Activated CD4-positive, alpha-beta T cell treated with anti-CD3 and anti-CD28 coated beads, Interleukin-2, amount 10 ng/mL, durations not matched to agents 7 days and 5 days (primary cell): ENCODE measurements at regions of chr3 and their contacts with region 1.

Region 1: GRCh38 chr3:9062570-9062969 is 99.3 kb upstream of the RAD18 start:
- DNase-seq: no peak
- H3K4me3 Mint-ChIP-seq: no peak overlapping the region
- H3K27ac Mint-ChIP-seq: no peak overlapping the region
- H3K4me1 Mint-ChIP-seq: no peaks in the 10 kb centered on the region
- H3K27me3 Mint-ChIP-seq: no peaks in the 10 kb centered on the region

Region 2: GRCh38 chr3:8499181-8499611 is 563.4 kb before region 1 on chr3:
- CTCF ChIA-PET with region 1: interaction called, 10 read pairs
- POLR2A ChIA-PET with region 1: no interaction called
- DNase-seq: no peak
- H3K4me3 Mint-ChIP-seq: no peak overlapping the region
- H3K27ac Mint-ChIP-seq: no peak overlapping the region
- H3K4me1 Mint-ChIP-seq: peaks cover 14% of the 10 kb centered on the region
- H3K27me3 Mint-ChIP-seq: peaks cover 10% of the 10 kb centered on the region

Region 3: DNA sequence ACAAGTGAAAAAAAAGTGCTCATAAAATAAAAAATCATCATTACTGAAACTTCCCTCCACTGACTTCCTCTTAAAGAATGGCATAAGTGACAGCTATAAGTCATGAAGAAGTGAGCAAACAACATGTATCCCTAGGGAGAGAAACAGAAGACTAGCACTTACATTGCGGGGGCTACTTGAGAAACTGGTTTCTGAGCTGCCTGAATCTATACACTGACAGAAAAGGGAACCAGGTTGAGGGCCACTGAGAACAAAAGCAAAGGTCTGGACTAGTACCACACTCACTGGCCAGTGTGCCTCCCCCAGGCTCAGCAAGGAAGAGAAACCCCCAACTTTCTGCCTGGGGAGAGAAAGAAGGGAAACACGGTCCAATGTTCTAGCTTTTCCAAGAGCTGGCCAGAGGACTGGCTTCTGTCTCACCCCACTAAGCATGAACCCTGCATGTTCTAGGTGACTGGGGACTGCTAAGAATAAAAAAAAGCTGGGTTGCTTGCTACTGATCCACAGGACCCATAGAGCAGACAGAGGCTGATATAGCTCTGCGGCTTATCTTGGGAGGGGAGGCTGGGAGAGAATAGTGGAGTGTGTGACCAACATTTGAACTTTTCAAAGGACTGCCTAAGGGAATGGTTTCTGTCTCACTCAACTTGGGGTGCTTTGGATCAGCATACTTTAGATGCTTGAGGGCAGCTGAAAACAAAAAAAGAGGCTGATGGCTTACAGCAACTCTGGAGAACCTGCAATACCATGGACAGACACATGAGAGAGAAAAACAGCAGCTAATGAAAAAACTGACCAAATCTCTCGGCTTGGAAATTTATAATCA is 107.4 kb before region 1 on chr3:
- CTCF ChIA-PET with region 1: no interaction called
- POLR2A ChIA-PET with region 1: no interaction called
- DNase-seq: no peak
- H3K4me3 Mint-ChIP-seq: no peak overlapping the region
- H3K27ac Mint-ChIP-seq: no peak overlapping the region
- H3K4me1 Mint-ChIP-seq: peaks cover 33% of the 10 kb centered on the region
- H3K27me3 Mint-ChIP-seq: no peaks in the 10 kb centered on the region

Region 4: DNA sequence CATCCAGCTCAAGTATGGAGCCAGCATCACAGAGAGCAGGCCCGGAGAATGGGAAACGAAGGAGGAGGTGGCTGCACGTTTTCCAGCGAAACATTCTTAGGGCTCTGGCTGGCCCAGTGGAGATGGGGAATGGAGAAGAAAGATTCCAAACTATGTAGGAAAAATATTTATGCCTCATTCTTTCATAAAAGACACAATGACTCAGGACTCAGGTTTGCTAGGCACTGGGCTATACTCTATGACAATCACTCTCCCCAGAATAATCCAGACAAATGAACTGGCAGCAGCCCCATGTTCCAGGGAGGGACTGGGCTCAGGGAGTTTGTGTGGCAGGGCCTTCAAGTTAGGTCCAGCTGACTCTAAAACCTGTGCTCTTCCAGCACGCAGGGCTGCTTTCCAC is 11.5 kb after region 1 on chr3:
- CTCF ChIA-PET with region 1: no interaction called
- POLR2A ChIA-PET with region 1: no interaction called
- DNase-seq: no peak
- H3K4me3 Mint-ChIP-seq: no peak overlapping the region
- H3K27ac Mint-ChIP-seq: no peak overlapping the region
- H3K4me1 Mint-ChIP-seq: no peaks in the 10 kb centered on the region
- H3K27me3 Mint-ChIP-seq: peaks cover 1% of the 10 kb centered on the region